AG04450 (cell line): ENCODE measurements at regions of chr11 and their contacts with region 1.

Region 1: GRCh38 chr11:108697872-108698473 is 33.1 kb downstream of the DDX10 start:
- DNase-seq: peak; percentile 58
- H3K4me3 ChIP-seq: no peak overlapping the region
- H3K27ac ChIP-seq: no peak overlapping the region
- H3K27me3 ChIP-seq: no peaks in the 10 kb centered on the region
- CTCF ChIP-seq: peak; percentile 99

Region 2: GRCh38 chr11:108871152-108871551 is 173.2 kb after region 1 on chr11:
- CTCF ChIA-PET with region 1: interaction called, 20 read pairs
- POLR2A ChIA-PET with region 1: no interaction called
- DNase-seq: peak; percentile 3
- H3K4me3 ChIP-seq: no peak overlapping the region
- H3K27ac ChIP-seq: no peak overlapping the region
- H3K27me3 ChIP-seq: no peaks in the 10 kb centered on the region
- CTCF ChIP-seq: peak; percentile 72

Region 3: GRCh38 chr11:108927791-108928545 is 230.0 kb after region 1 on chr11:
- CTCF ChIA-PET with region 1: interaction called, 29 read pairs
- POLR2A ChIA-PET with region 1: no interaction called
- DNase-seq: no peak
- H3K4me3 ChIP-seq: no peak overlapping the region
- H3K27ac ChIP-seq: no peak overlapping the region
- H3K27me3 ChIP-seq: no peaks in the 10 kb centered on the region
- CTCF ChIP-seq: no peak

Region 4: DNA sequence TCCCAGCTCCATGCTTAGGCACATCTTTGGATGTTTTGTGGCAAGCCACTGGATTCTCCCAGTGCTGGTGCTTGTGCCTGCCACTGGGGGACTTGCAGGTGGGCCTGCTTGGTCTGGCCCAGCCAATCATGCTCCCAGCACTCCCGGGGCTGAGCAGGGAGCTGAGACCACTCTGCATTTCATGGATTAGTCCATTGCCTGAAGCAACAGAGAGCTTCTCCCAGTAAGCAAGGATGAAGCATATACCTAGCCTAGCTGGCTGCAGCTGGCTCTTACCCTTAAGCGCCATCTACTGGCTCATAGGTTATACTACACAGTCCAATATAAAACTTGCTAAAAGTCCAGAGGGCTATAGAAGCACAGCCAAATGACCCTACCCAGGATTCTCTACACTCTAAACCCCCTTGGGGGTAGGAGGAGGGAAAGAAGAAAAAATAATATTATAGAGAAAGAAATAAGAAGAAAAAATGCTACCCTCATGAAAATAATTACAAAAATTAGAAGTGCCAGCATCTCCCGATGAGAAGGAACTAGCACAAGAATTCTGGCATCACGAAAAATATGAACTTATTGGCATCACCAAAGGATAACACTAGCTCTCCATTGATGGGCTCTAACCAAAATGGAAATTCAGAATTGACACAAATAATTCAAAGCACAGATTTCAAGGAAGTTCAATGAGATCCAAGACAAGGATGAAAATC is 999.3 kb after region 1 on chr11:
- CTCF ChIA-PET with region 1: interaction called, 34 read pairs
- POLR2A ChIA-PET with region 1: no interaction called
- DNase-seq: peak; percentile 15
- H3K4me3 ChIP-seq: no peak overlapping the region
- H3K27ac ChIP-seq: no peak overlapping the region
- H3K27me3 ChIP-seq: no peaks in the 10 kb centered on the region
- CTCF ChIP-seq: peak; percentile 75

Region 5: DNA sequence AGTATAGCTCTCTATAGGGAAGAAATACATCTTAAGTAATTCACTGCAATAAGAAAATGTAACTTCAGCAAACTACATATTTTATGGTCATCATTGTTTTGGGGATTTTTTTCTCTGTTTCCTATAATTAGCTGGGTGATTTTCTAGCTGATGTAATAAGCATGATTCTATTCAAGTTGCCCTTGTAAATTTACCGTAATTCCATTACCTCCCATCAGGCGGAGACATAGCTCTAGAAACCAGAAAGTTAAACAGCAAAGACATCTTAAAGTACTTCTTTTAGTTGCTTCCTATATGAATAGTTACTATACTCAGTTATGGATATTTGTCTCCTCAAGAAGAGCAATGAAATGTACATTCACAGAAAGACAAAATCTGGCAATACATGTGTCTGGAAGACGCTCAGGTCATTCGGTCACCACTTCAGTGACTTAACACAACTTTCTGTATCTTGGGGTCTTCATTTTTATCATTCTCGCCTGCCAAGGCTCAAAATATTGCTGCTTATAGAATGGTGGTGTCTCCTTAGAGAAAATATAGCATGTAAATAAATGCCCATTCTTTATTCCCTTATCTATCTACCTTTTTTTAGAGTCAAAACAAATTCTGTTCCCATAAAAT is 1155.3 kb after region 1 on chr11:
- CTCF ChIA-PET with region 1: interaction called, 13 read pairs
- POLR2A ChIA-PET with region 1: no interaction called
- DNase-seq: peak; percentile 63
- H3K4me3 ChIP-seq: no peak overlapping the region
- H3K27ac ChIP-seq: no peak overlapping the region
- H3K27me3 ChIP-seq: no peaks in the 10 kb centered on the region
- CTCF ChIP-seq: peak; percentile 83

Region 6: DNA sequence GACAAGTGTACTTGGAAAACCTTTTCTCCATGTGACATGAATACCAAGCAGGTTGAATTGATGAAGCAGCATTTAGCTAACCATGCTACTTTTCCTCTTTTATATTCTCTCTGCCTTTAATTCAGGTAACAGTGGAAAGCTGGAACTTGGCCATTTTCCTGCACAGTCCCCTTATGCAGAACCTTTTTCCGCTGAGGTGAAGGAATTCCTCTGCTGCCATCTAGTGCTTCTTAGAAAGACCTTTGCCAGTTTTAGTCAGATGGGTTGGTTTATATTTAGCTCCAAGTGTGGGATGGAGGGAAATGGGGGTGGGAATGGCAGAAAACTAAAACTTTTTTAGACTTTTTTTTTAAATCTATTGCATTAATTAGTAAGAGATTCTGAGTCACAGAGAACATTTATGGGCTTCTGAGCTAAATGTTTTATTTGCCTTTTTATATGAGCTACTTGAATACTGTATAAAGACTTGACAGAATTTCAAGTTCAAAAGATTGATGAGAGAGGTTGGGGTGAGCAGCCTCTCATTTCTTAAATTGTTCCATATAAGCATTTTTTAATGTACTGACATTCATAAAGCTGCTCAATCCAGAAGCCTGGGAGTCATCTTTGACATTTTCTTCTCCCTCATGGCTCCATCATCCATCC is 1241.3 kb after region 1 on chr11:
- CTCF ChIA-PET with region 1: interaction called, 14 read pairs
- POLR2A ChIA-PET with region 1: no interaction called
- DNase-seq: peak; percentile 51
- H3K4me3 ChIP-seq: no peak overlapping the region
- H3K27ac ChIP-seq: no peak overlapping the region
- H3K27me3 ChIP-seq: no peaks in the 10 kb centered on the region
- CTCF ChIP-seq: peak; percentile 79